ENCODE measurements at regions of chr1 and their contacts with region 1.

Region 1: DNA sequence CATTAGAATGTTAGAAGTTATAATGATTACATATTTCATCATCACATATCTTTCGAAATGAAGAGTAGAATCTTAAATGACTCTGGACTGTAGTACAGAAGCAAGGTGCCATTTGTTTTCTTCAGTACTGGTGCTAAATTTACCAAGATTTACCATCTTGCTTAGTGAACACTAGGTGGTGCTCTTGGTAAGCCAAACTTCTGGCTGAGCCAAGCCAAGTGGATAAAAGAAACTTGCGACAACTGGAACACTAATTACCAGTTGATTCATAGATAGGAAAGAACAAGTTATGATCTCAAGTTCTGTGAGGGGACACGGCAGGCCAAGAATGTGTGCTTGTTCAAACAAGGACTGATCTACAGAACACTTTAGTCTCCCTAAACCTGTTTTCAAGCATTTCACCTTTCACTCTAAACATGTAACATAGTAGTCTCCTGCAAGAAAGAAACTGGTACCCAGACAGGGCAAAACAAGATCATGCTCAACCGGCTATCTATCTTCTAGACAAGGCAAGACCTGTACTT is 19.8 kb downstream of the SPRTN start:
- DNase-seq: peak; percentile 19
- H3K4me3 ChIP-seq: no peak overlapping the region
- H3K27ac ChIP-seq: peak overlapping the region in 2 of 4 donors; percentile 16 to 51
- H3K4me1 ChIP-seq: peaks cover 0 to 6% (median 4%) of the 10 kb centered on the region in 4 donors
- H3K27me3 ChIP-seq: no peaks in the 10 kb centered on the region
- CTCF ChIP-seq: peak; percentile 67 to 85 (median 75)
- EP300 ChIP-seq: no peak
- POLR2A ChIP-seq: no peak

Region 2: GRCh38 chr1:231200388-231201031 is 157.4 kb before region 1 on chr1:
- in situ Hi-C with region 1: no loop called
- intact Hi-C with region 1: no loop called
- DNase-seq: no peak
- H3K4me3 ChIP-seq: no peak overlapping the region
- H3K27ac ChIP-seq: no peak overlapping the region
- H3K4me1 ChIP-seq: no peaks in the 10 kb centered on the region
- H3K27me3 ChIP-seq: peaks cover 12% of the 10 kb centered on the region
- CTCF ChIP-seq: no peak
- EP300 ChIP-seq: no peak
- POLR2A ChIP-seq: no peak

Region 3: GRCh38 chr1:231487019-231487418 is 129.1 kb after region 1 on chr1:
- in situ Hi-C with region 1: no loop called
- intact Hi-C with region 1: no loop called
- DNase-seq: peak; percentile 10
- H3K4me3 ChIP-seq: no peak overlapping the region
- H3K27ac ChIP-seq: no peak overlapping the region
- H3K4me1 ChIP-seq: no peaks in the 10 kb centered on the region
- H3K27me3 ChIP-seq: no peaks in the 10 kb centered on the region
- CTCF ChIP-seq: no peak
- EP300 ChIP-seq: no peak
- POLR2A ChIP-seq: no peak

Region 4: GRCh38 chr1:231500666-231501065 is 142.8 kb after region 1 on chr1:
- in situ Hi-C with region 1: no loop called
- intact Hi-C with region 1: no loop called
- DNase-seq: no peak
- H3K4me3 ChIP-seq: no peak overlapping the region
- H3K27ac ChIP-seq: no peak overlapping the region
- H3K4me1 ChIP-seq: peaks cover 0 to 4% (median 0%) of the 10 kb centered on the region in 4 donors
- H3K27me3 ChIP-seq: no peaks in the 10 kb centered on the region
- CTCF ChIP-seq: no peak
- EP300 ChIP-seq: no peak
- POLR2A ChIP-seq: no peak

Region 5: DNA sequence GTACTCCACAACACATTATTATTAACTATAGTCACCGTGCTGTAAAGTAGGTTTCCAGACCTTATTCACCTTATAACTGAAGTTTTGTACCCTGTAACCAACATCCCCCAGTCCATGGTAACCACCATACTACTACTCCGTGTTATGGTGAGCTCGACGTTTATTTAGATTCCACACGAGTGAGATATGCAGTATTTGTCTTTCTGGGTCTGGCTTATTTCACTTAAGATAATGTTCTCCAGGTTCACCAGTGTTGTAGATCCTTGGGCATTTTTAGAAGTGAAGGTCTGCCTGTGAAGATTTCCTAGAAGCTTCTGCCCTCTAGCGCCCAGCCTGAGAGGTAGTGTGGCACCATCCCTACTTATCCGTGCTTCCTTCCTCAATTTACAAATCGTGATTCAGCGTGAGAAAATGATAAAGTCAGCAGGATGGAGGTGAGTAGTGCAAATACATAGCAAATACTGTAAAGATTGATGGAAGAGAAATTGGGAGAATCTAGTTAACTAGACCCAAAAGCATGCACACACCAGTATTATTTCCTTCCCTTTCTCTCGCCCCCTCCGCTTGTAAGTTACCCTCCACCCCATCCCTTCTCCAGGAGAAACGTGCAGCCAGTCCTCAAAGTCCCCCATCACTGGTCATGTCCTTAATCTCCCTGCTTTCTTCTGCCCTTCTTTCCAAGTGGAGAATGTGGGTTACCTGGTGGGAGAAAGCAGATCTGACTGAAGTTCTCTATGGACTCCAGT is 232.7 kb after region 1 on chr1:
- in situ Hi-C with region 1: loop called in 1 of 4 experiments (anchors 5 kb)
- intact Hi-C with region 1: loop called (anchors 5 kb)
- DNase-seq: peak; percentile 53
- H3K4me3 ChIP-seq: no peak overlapping the region
- H3K27ac ChIP-seq: peak overlapping the region in 3 of 4 donors; percentile 7 to 22 (median 21)
- H3K4me1 ChIP-seq: peaks cover 0 to 7% (median 0%) of the 10 kb centered on the region in 4 donors
- H3K27me3 ChIP-seq: no peaks in the 10 kb centered on the region
- CTCF ChIP-seq: peak; percentile 59 to 66 (median 65)
- EP300 ChIP-seq: no peak
- POLR2A ChIP-seq: no peak

Region 6: GRCh38 chr1:232344791-232345399 is 987.0 kb after region 1 on chr1:
- in situ Hi-C with region 1: no loop called
- intact Hi-C with region 1: no loop called
- DNase-seq: no peak
- H3K4me3 ChIP-seq: no peak overlapping the region
- H3K27ac ChIP-seq: no peak overlapping the region
- H3K4me1 ChIP-seq: no peaks in the 10 kb centered on the region
- H3K27me3 ChIP-seq: no peaks in the 10 kb centered on the region
- CTCF ChIP-seq: no peak
- EP300 ChIP-seq: no peak
- POLR2A ChIP-seq: no peak

Measured in transverse colon (tissue), 4 donors.